PC-9 (cell line): ENCODE measurements at regions of chr22 and their contacts with region 1.

Region 1: DNA sequence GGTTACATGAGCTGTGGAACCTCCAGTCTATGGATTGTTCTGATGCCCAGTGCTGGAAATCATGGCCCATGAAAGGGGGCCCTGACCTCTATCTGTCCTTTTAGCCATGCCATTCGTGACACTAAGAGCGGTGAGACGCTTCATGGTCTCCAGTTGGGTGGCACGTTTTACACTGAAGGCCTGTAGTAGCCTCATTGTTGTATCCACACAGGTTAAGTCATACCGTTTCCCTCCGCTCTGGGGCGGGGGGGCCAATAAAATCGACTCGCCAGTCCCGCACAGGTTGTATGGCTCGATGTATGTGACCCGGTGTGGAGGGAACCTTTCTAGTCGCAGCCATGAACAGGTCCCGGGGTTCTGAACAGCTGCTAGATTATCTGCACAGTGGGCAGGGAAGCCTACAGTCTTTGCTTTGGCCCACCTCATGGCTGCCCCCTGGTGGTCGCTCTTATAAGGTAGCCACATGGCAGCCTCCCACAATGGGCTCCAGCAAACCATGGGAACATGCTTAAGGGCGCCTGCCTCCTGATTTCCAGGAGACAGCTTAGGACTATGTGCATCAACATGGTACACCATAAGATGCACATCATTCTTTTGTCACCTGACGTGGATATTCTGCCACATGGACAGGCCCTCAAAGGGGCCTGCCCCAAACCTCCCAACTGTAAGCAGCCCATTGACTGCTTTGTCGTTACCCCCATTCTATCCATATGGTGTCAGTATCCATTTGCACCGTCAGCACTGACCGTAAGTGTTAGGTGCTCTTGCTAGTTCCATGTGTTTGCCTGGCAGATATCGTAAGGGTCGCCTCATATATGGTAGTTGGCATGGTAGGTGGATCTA is 19.7 kb upstream of the APOL3 start:
- DNase-seq: peak; percentile 32 to 55
- H3K4me3 ChIP-seq: no peak overlapping the region
- H3K27ac ChIP-seq: no peak overlapping the region
- H3K4me1 ChIP-seq: no peaks in the 10 kb centered on the region
- H3K27me3 ChIP-seq: 0 out of 2 replicates have a peak, but pooled peaks cover 10% of the 10 kb centered on the region
- CTCF ChIP-seq: peak; percentile 85

Region 2: GRCh38 chr22:35733791-35734516 is 446.3 kb before region 1 on chr22:
- CTCF ChIA-PET with region 1: no interaction called
- POLR2A ChIA-PET with region 1: no interaction called
- intact Hi-C with region 1: no loop called
- DNase-seq: no peak
- H3K4me3 ChIP-seq: no peak overlapping the region
- H3K27ac ChIP-seq: no peak overlapping the region
- H3K4me1 ChIP-seq: no peaks in the 10 kb centered on the region
- H3K27me3 ChIP-seq: no peaks in the 10 kb centered on the region
- CTCF ChIP-seq: no peak

Region 3: DNA sequence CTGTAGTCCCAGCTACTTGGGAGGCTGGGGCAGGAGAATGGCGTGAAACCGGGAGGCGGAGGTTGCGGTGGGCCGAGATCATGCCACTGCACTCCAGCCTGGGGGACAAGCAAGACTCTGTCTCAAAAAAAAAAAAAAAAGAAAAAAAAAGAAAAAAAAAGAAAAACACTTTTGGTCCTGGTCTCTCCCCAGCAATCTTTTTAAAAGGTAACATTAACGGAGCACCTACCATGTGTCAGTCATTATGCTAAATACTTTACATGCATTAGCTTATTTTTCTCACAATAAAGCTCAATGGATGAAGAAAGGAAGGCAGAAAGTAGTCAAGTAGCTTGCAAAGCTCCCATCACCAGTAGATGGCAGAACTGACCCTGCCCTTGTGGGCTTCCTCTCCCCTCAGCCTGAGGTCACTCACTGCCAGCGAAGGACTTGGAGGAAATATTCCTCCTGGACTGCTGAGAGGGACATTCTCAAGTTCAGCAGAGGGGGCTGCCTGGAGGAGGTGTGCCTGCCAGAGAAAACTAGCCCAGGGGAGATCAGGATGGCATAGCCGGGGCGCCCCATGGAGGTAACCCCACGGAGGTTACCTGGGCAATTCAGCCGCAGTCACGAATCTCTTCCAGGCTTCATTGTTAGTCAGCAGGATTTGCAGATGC is 35.2 kb before region 1 on chr22:
- CTCF ChIA-PET with region 1: no interaction called
- POLR2A ChIA-PET with region 1: no interaction called
- intact Hi-C with region 1: loop called (anchors 1 kb)
- DNase-seq: peak; percentile 51 to 63
- H3K4me3 ChIP-seq: no peak overlapping the region
- H3K27ac ChIP-seq: no peak overlapping the region
- H3K4me1 ChIP-seq: no peaks in the 10 kb centered on the region
- H3K27me3 ChIP-seq: peaks cover 17% of the 10 kb centered on the region
- CTCF ChIP-seq: peak; percentile 77

Region 4: GRCh38 chr22:36156515-36157419 is 23.5 kb before region 1 on chr22:
- CTCF ChIA-PET with region 1: no interaction called
- POLR2A ChIA-PET with region 1: interaction called, 10 read pairs
- intact Hi-C with region 1: no loop called
- DNase-seq: peak in 1 of 2 experiments; percentile 52
- H3K4me3 ChIP-seq: 0 out of 2 replicates have a peak overlapping the region, but pooled peaks have one; percentile 1
- H3K27ac ChIP-seq: no peak overlapping the region
- H3K4me1 ChIP-seq: no peaks in the 10 kb centered on the region
- H3K27me3 ChIP-seq: no peaks in the 10 kb centered on the region
- CTCF ChIP-seq: no peak

Region 5: GRCh38 chr22:37043828-37044538 is 863.7 kb after region 1 on chr22:
- CTCF ChIA-PET with region 1: interaction called, 11 read pairs
- POLR2A ChIA-PET with region 1: no interaction called
- intact Hi-C with region 1: no loop called
- DNase-seq: peak; percentile 74 to 80
- H3K4me3 ChIP-seq: no peak overlapping the region
- H3K27ac ChIP-seq: no peak overlapping the region
- H3K4me1 ChIP-seq: peaks cover 38% of the 10 kb centered on the region
- H3K27me3 ChIP-seq: no peaks in the 10 kb centered on the region
- CTCF ChIP-seq: peak; percentile 93

Region 6: DNA sequence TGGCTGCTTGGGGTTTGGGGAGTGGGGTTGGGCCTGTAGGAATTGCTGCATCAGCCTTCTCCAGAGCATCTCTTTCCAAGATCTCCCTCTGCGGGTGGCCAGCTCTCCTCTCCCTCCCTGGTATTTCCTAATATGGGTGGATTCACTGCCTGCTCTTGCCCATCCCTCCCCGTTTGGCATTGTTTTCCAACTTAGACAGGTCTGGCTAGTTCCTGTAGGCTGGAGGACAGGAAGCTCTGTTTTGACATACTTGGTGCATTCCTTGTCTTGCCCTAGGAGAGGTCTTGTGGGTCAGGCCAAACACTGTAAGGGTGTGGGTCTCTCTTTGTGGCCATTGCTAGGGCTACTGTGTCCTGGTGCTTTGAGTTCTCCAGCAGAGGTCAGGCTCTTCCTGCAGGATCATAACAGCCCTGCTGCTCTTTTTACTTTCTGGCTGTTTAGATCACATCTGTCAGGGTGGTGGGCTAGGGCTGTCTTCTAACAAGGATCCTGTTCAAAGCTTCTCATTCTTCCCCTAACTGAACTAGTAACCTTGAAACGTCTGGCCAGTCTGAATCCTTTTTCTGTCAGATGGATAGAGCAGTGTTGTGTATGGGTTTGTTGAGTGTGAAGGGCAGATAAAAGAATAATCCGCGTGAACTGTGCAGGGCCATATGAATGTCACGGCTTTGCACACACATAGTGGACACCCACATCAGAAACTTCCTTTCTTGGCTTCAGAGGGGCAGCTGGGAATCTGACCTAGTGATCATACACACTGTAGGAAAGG is 1707.5 kb after region 1 on chr22:
- CTCF ChIA-PET with region 1: no interaction called
- POLR2A ChIA-PET with region 1: no interaction called
- intact Hi-C with region 1: no loop called
- DNase-seq: peak; percentile 93 to 100
- H3K4me3 ChIP-seq: no peak overlapping the region
- H3K27ac ChIP-seq: peak overlapping the region; percentile 62
- H3K4me1 ChIP-seq: peaks cover 37% of the 10 kb centered on the region
- H3K27me3 ChIP-seq: no peaks in the 10 kb centered on the region
- CTCF ChIP-seq: peak; percentile 87